MCF 10A (cell line): ENCODE measurements at regions of chr12 and their contacts with region 1.

Region 1: GRCh38 chr12:89709157-89709994 is 738 bp upstream of the ATP2B1 start:
- DNase-seq: peak; percentile 97
- H3K4me3 Mint-ChIP-seq: peak overlapping the region; percentile 94
- H3K27ac Mint-ChIP-seq: peak overlapping the region; percentile 95
- H3K4me1 Mint-ChIP-seq: peaks cover 22% of the 10 kb centered on the region
- H3K27me3 Mint-ChIP-seq: no peaks in the 10 kb centered on the region
- CTCF ChIP-seq: no peak

Region 2: GRCh38 chr12:89461649-89462612 is 247.4 kb before region 1 on chr12:
- CTCF ChIA-PET with region 1: no interaction called
- POLR2A ChIA-PET with region 1: no interaction called
- intact Hi-C with region 1: no loop called
- DNase-seq: peak; percentile 71
- H3K4me3 Mint-ChIP-seq: peak overlapping the region; percentile 20
- H3K27ac Mint-ChIP-seq: peak overlapping the region; percentile 9
- H3K4me1 Mint-ChIP-seq: peaks cover 8% of the 10 kb centered on the region
- H3K27me3 Mint-ChIP-seq: no peaks in the 10 kb centered on the region
- CTCF ChIP-seq: peak; percentile 48

Region 3: GRCh38 chr12:89542912-89543592 is 166.3 kb before region 1 on chr12:
- CTCF ChIA-PET with region 1: interaction called, 31 read pairs
- POLR2A ChIA-PET with region 1: interaction called, 21 read pairs
- intact Hi-C with region 1: loop called (anchors 1 kb)
- DNase-seq: peak; percentile 87
- H3K4me3 Mint-ChIP-seq: no peak overlapping the region
- H3K27ac Mint-ChIP-seq: no peak overlapping the region
- H3K4me1 Mint-ChIP-seq: peaks cover 34% of the 10 kb centered on the region
- H3K27me3 Mint-ChIP-seq: no peaks in the 10 kb centered on the region
- CTCF ChIP-seq: peak; percentile 89

Region 4: GRCh38 chr12:89733579-89734201 is 24.3 kb after region 1 on chr12:
- CTCF ChIA-PET with region 1: no interaction called
- POLR2A ChIA-PET with region 1: interaction called, 41 read pairs
- intact Hi-C with region 1: loop called (anchors 1 kb)
- DNase-seq: peak; percentile 86
- H3K4me3 Mint-ChIP-seq: peak overlapping the region; percentile 4
- H3K27ac Mint-ChIP-seq: peak overlapping the region; percentile 82
- H3K4me1 Mint-ChIP-seq: peaks cover 36% of the 10 kb centered on the region
- H3K27me3 Mint-ChIP-seq: no peaks in the 10 kb centered on the region
- CTCF ChIP-seq: no peak

Region 5: GRCh38 chr12:89893972-89894706 is 184.8 kb after region 1 on chr12:
- CTCF ChIA-PET with region 1: no interaction called
- POLR2A ChIA-PET with region 1: interaction called, 6 read pairs
- intact Hi-C with region 1: loop called (anchors 1 kb)
- DNase-seq: peak; percentile 42
- H3K4me3 Mint-ChIP-seq: no peak overlapping the region
- H3K27ac Mint-ChIP-seq: peak overlapping the region; percentile 80
- H3K4me1 Mint-ChIP-seq: peaks cover 17% of the 10 kb centered on the region
- H3K27me3 Mint-ChIP-seq: no peaks in the 10 kb centered on the region
- CTCF ChIP-seq: no peak

Region 6: DNA sequence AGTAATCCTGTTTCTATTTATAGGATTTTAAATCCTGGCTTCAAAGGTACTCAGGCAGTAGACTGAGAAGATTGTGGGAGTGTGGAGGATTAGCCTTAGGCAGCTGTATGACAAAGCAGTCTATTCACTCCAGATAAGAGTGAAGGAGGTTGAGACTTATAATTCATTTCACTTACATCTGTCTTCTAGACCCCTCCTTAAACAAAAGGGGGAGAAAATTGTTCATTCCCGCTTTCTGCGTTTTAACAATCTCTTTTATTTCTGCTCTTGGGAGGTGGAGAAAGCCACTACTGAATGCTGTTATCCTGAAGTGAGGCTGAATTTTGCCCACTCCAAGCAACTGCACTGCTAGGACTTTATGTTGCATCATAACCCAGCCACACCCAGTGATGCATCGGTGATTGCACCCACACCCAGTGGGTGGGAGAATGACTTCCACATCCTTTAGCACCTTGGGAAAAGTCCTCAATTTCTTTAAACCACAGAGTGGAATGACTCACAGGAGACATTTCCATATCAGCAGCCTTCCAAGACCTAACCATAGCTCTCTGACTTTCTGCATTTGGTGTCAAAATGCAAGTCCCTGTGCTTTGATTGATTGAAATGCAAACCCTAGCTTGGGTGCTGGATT is 381.8 kb after region 1 on chr12:
- CTCF ChIA-PET with region 1: interaction called, 4 read pairs
- POLR2A ChIA-PET with region 1: interaction called, 10 read pairs
- intact Hi-C with region 1: loop called (anchors 2 kb)
- DNase-seq: peak; percentile 98
- H3K4me3 Mint-ChIP-seq: peak overlapping the region; percentile 9
- H3K27ac Mint-ChIP-seq: peak overlapping the region; percentile 91
- H3K4me1 Mint-ChIP-seq: peaks cover 17% of the 10 kb centered on the region
- H3K27me3 Mint-ChIP-seq: no peaks in the 10 kb centered on the region
- CTCF ChIP-seq: no peak

Region 7: DNA sequence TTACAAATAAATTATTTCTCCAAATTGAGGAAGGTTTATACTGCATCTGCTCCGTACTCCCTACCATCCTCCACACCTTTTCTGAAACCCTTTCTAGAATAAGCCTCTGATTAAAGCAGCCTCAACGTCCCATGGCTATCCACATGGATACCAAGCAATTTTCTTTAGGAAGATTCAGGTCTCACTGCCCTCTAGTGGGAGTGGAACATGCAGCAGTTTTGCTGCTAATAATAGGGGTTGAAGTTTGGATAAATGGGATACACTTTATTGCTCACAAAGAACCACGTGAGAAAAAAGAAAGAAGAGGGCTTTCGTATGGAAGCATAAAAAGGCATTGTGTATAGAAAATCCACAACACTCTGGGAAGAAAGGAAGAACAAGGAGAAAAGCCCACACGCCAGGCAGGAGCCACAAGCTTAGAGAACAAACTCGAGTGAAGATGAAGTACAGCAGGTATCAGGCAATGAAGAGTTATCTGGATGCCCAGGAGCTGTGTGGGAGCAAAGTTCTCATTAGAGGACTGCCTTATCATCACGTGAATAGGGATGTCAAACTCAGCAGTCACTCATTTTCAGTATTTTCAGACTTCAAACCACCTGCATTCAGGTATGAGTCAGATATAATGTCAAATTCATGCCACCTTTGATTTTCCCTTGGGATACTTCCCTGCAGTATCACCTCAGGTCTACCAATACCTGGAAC is 1199.8 kb after region 1 on chr12:
- CTCF ChIA-PET with region 1: no interaction called
- POLR2A ChIA-PET with region 1: interaction called, 4 read pairs
- intact Hi-C with region 1: loop called (anchors 5 kb)
- DNase-seq: peak; percentile 68
- H3K4me3 Mint-ChIP-seq: no peak overlapping the region
- H3K27ac Mint-ChIP-seq: no peak overlapping the region
- H3K4me1 Mint-ChIP-seq: peaks cover 17% of the 10 kb centered on the region
- H3K27me3 Mint-ChIP-seq: no peaks in the 10 kb centered on the region
- CTCF ChIP-seq: peak; percentile 45